Lower leg skin (tissue), 4 donors: ENCODE measurements at regions of chr19 and their contacts with region 1.

Region 1: GRCh38 chr19:4988770-4989251 is 19.9 kb downstream of the KDM4B start:
- DNase-seq: peak; percentile 56 to 89
- H3K4me3 ChIP-seq: no peak overlapping the region
- CTCF ChIP-seq: no peak
- POLR2A ChIP-seq: no peak

Region 2: GRCh38 chr19:4844348-4845179 is 144.2 kb before region 1 on chr19:
- intact Hi-C with region 1: no loop called
- DNase-seq: peak in 1 of 2 donors; percentile 64
- H3K4me3 ChIP-seq: no peak overlapping the region
- CTCF ChIP-seq: no peak
- POLR2A ChIP-seq: no peak

Region 3: GRCh38 chr19:5023128-5023571 is 34.3 kb after region 1 on chr19:
- intact Hi-C with region 1: loop called (anchors 5 kb)
- DNase-seq: no peak
- H3K4me3 ChIP-seq: no peak overlapping the region
- CTCF ChIP-seq: no peak
- POLR2A ChIP-seq: no peak